ENCODE measurements at regions of chr19 and their contacts with region 1.

Region 1: DNA sequence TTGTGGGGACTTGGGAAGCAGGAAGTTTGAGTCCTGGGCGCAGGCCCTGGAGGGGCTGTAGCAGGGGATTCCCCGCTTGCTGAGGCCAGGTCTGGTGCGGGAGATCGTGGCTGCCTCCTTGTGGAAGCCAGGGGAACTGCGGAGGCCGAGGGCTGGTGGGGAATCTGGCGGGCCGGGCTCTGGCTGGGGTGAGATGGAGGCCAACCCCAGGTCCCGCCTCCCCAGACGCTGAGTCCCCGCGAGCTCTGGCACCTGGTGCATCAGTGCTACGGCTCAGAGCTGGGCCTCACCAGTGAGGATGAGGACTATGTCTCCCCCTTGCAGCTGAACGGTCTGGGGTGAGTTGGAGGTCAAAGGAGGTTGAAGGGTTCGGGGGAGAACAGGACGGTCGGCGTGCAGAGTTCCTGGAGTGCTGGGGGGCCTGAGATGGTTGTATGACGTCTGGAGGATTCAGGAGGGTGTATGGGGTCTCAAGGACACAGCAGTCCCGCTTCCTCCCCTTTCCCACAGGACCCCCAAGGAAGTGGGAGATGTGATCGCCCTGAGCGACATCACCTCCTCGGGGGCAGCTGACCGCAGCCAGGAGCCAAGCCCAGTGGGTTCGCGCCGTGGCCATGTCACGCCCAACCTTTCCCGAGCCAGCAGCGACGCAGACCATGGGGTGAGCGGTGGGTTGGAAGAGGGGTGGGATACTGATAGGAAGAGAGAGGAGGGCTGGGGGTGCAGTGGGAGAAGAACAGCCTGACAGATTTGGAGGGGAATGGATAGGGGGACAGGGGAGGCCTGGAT is 13.1 kb downstream of the GRAMD1A start:
- DNase-seq: peak; percentile 85 to 88 (median 87)
- ATAC-seq: peak; percentile 85
- H3K4me3 ChIP-seq: no peak overlapping the region
- H3K4me1 ChIP-seq: peaks cover 13% of the 10 kb centered on the region
- CTCF ChIP-seq: peak; percentile 97

Region 2: DNA sequence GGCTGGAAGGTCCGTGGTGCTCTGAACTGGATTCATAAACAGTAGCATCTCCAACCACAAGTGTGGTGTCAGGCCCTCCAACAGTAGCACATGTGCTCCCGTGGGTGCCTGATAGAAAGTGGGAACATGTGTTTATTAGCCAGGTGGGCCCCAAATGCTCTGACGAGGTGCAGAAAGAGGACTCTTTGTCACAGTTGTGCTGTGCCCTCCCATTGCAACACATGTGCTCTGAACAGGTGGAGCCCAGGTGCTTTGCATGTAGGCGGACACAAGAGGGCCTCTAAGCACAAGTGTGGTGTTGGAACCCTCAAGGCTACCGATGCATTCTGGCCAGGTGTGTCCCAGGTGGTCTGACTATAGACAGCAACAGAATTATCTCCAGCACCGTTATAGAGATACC is 161.9 kb before region 1 on chr19:
- intact Hi-C with region 1: no loop called
- DNase-seq: no peak
- ATAC-seq: no peak
- H3K4me3 ChIP-seq: no peak overlapping the region
- H3K4me1 ChIP-seq: no peaks in the 10 kb centered on the region
- CTCF ChIP-seq: no peak

Region 3: DNA sequence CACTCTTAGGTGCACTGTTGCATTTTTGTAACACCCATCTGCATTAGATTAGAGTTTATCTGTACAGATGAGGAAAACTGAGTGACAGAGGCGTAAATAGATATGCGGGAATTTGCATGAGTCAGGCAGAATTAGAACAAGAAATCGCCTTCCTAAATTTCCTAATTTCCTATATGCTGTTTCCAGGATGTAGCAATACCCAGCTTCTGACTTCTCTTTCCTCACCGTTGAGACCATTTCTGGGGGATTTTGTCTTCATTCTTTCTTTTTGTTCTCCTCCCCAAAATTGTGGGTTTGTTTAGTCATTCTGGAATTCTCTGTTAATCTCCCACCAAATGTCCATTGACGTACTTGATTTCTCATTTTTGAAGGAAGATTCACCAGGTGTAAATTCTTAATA is 38.6 kb before region 1 on chr19:
- intact Hi-C with region 1: loop called (anchors 2 to 5 kb)
- DNase-seq: no peak
- ATAC-seq: no peak
- H3K4me3 ChIP-seq: no peak overlapping the region
- H3K4me1 ChIP-seq: peaks cover 5% of the 10 kb centered on the region
- CTCF ChIP-seq: no peak